ENCODE measurements at regions of chr13 and their contacts with region 1.

Region 1: GRCh38 chr13:49792550-49793324 is at the start of gene KPNA3:
- DNase-seq: peak; percentile 91 to 99 (median 96)
- ATAC-seq: peak; percentile 89 to 93 (median 90)
- H3K4me3 ChIP-seq: peak within 1 kb of the TSS; percentile 75 to 84
- H3K4me3 Mint-ChIP-seq: peak within 1 kb of the TSS; percentile 82 to 95 (median 94)
- H3K27ac ChIP-seq: peak within 1 kb of the TSS; percentile 77
- H3K27ac Mint-ChIP-seq: peak within 1 kb of the TSS; percentile 89 to 98
- H3K4me1 ChIP-seq: peaks cover 12 to 21% of the 10 kb centered on the region in 2 experiments
- H3K4me1 Mint-ChIP-seq: peaks cover 38% of the 10 kb centered on the region in 3 donors
- H3K27me3 ChIP-seq: peaks cover 0 to 3% of the 10 kb centered on the region in 2 experiments
- H3K27me3 Mint-ChIP-seq: peaks cover 4% of the 10 kb centered on the region in 2 donors
- total RNA-seq, gene KPNA3: 19.6 to 22.3 (median 21.4) TPM

Region 2: GRCh38 chr13:49495783-49496762 is 296.7 kb before region 1 on chr13 and contains the start of gene PHF11:
- CTCF ChIA-PET with region 1: no interaction called
- POLR2A ChIA-PET with region 1: interaction called in 1 of 2 experiments, 11 read pairs
- DNase-seq: peak; percentile 66 to 92 (median 83)
- ATAC-seq: peak; percentile 84 to 89 (median 87)
- H3K4me3 ChIP-seq: peak within 1 kb of the TSS; percentile 79 to 95
- H3K4me3 Mint-ChIP-seq: peak within 1 kb of the TSS; percentile 95 to 98 (median 98)
- H3K27ac ChIP-seq: peak within 1 kb of the TSS; percentile 95
- H3K27ac Mint-ChIP-seq: peak within 1 kb of the TSS; percentile 100
- H3K4me1 ChIP-seq: peaks cover 6 to 38% of the 10 kb centered on the region in 2 experiments
- H3K4me1 Mint-ChIP-seq: peaks cover 53 to 57% (median 56%) of the 10 kb centered on the region in 3 donors
- H3K27me3 ChIP-seq: no peaks in the 10 kb centered on the region
- H3K27me3 Mint-ChIP-seq: no peaks in the 10 kb centered on the region
- total RNA-seq, gene PHF11: 94.0 to 119 (median 113) TPM

Region 3: DNA sequence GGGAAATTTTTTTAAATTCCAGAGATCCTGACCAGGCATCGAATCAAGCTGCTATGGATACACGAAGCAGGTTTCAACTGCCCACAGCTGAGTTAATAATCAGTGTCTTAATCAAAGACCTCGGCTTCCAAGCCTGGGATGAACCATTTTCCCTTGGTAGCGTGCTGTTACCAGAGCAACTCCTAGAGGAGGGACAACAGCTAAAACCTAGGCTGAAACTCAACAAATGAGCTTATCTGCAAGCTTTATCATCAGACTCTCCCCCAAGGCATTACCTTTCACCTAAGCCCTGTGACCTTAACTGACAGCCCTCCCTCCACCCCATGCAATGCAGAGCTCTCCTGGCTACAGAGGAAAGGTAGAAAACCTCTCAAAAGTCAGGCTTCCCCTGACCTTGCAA is 247.1 kb before region 1 on chr13:
- CTCF ChIA-PET with region 1: interaction called in 1 of 2 experiments, 10 read pairs
- POLR2A ChIA-PET with region 1: no interaction called
- DNase-seq: no peak
- ATAC-seq: no peak
- H3K4me3 ChIP-seq: no peak overlapping the region
- H3K4me3 Mint-ChIP-seq: no peak overlapping the region
- H3K27ac ChIP-seq: no peak overlapping the region
- H3K27ac Mint-ChIP-seq: no peak overlapping the region
- H3K4me1 ChIP-seq: peaks cover 0 to 4% of the 10 kb centered on the region in 2 experiments
- H3K4me1 Mint-ChIP-seq: peaks cover 4 to 6% (median 4%) of the 10 kb centered on the region in 3 donors
- H3K27me3 ChIP-seq: no peaks in the 10 kb centered on the region
- H3K27me3 Mint-ChIP-seq: no peaks in the 10 kb centered on the region

Region 4: DNA sequence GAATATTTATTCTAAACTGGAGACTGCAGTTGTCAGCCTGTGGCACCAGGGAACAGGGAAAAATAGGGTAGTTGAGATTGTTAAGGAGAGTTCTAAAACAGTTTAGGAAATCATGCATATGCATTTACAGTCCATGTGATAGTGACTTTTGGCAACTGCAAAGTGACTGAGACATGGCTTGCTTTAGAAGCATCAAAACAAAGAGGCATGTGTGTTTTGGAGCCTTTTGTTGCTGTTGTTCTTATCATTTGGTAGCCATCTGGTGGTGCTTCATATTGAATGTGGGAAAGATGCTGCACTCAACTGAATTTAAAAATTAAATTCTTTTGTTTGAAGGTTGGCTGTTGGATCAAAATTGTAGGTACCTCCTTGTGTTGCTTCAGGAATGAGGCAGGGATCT is 91.2 kb before region 1 on chr13:
- CTCF ChIA-PET with region 1: no interaction called
- POLR2A ChIA-PET with region 1: interaction called in 1 of 2 experiments, 11 read pairs
- DNase-seq: no peak
- ATAC-seq: no peak
- H3K4me3 ChIP-seq: no peak overlapping the region
- H3K4me3 Mint-ChIP-seq: no peak overlapping the region
- H3K27ac ChIP-seq: no peak overlapping the region
- H3K27ac Mint-ChIP-seq: no peak overlapping the region
- H3K4me1 ChIP-seq: no peaks in the 10 kb centered on the region
- H3K4me1 Mint-ChIP-seq: no peaks in the 10 kb centered on the region
- H3K27me3 ChIP-seq: no peaks in the 10 kb centered on the region
- H3K27me3 Mint-ChIP-seq: no peaks in the 10 kb centered on the region

Region 5: GRCh38 chr13:49716615-49717014 is 76.1 kb before region 1 on chr13:
- CTCF ChIA-PET with region 1: no interaction called
- POLR2A ChIA-PET with region 1: no interaction called
- DNase-seq: no peak
- ATAC-seq: no peak
- H3K4me3 ChIP-seq: no peak overlapping the region
- H3K4me3 Mint-ChIP-seq: no peak overlapping the region
- H3K27ac ChIP-seq: no peak overlapping the region
- H3K27ac Mint-ChIP-seq: no peak overlapping the region
- H3K4me1 ChIP-seq: no peaks in the 10 kb centered on the region
- H3K4me1 Mint-ChIP-seq: no peaks in the 10 kb centered on the region
- H3K27me3 ChIP-seq: no peaks in the 10 kb centered on the region
- H3K27me3 Mint-ChIP-seq: no peaks in the 10 kb centered on the region

Region 6: DNA sequence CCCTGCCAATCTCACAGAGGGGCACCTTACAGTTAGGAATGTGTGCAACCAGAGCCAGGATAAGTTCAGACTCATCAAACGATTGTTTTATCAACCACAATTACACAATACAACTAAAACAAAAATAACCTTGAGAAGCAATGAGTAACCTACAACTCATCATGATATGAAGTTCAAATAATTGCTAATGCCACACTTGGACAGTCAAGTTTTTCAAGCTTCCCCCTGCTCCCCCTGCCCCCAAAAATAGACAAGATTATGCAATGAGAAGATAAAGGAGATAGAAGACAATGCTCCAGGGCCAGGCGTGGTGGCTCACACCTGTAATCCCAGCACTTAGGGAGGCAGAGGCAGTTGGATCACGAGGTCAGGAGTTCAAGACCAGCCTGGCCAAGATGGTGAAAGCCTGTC is 13.4 kb after region 1 on chr13:
- CTCF ChIA-PET with region 1: no interaction called
- POLR2A ChIA-PET with region 1: interaction called in 1 of 2 experiments, 10 read pairs
- DNase-seq: no peak
- ATAC-seq: no peak
- H3K4me3 ChIP-seq: no peak overlapping the region
- H3K4me3 Mint-ChIP-seq: no peak overlapping the region
- H3K27ac ChIP-seq: no peak overlapping the region
- H3K27ac Mint-ChIP-seq: no peak overlapping the region
- H3K4me1 ChIP-seq: no peaks in the 10 kb centered on the region
- H3K4me1 Mint-ChIP-seq: no peaks in the 10 kb centered on the region
- H3K27me3 ChIP-seq: peaks cover 0 to 12% of the 10 kb centered on the region in 2 experiments
- H3K27me3 Mint-ChIP-seq: peaks cover 14 to 21% of the 10 kb centered on the region in 2 donors

Region 7: GRCh38 chr13:50393628-50394027 is 600.9 kb after region 1 on chr13:
- CTCF ChIA-PET with region 1: no interaction called
- POLR2A ChIA-PET with region 1: no interaction called
- DNase-seq: no peak
- ATAC-seq: no peak
- H3K4me3 ChIP-seq: no peak overlapping the region
- H3K4me3 Mint-ChIP-seq: no peak overlapping the region
- H3K27ac ChIP-seq: no peak overlapping the region
- H3K27ac Mint-ChIP-seq: no peak overlapping the region
- H3K4me1 ChIP-seq: no peaks in the 10 kb centered on the region
- H3K4me1 Mint-ChIP-seq: no peaks in the 10 kb centered on the region
- H3K27me3 ChIP-seq: no peaks in the 10 kb centered on the region
- H3K27me3 Mint-ChIP-seq: no peaks in the 10 kb centered on the region

Measured in T-cell (primary cell).